ENCODE measurements at regions of chr11 and their contacts with region 1.

Region 1: DNA sequence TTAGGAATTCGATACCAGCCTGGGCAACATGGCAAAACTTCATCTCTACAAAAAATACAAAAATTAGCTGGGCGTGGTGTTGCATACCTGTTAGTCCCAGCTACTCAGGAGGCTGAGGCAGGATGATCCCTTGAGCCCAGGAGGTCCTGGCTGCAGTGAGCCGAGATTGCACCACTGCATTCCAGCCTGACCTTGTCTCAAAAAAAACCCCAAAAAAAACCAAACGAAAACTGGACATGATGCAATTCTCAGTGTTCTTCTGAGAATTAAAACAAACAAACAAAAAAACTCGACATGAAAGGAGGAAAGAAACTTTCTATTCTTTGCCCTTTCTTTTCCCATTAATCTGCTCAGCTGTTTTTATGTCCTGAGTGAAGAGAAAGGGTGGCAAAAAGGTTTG is 7.4 kb downstream of the MED17 start:
- DNase-seq: no peak
- ATAC-seq: no peak
- H3K4me3 ChIP-seq: no peak overlapping the region
- H3K27ac ChIP-seq: no peak overlapping the region
- H3K4me1 ChIP-seq: peaks cover 9 to 19% of the 10 kb centered on the region in 2 donors
- H3K27me3 ChIP-seq: no peaks in the 10 kb centered on the region
- CTCF ChIP-seq: no peak

Region 2: DNA sequence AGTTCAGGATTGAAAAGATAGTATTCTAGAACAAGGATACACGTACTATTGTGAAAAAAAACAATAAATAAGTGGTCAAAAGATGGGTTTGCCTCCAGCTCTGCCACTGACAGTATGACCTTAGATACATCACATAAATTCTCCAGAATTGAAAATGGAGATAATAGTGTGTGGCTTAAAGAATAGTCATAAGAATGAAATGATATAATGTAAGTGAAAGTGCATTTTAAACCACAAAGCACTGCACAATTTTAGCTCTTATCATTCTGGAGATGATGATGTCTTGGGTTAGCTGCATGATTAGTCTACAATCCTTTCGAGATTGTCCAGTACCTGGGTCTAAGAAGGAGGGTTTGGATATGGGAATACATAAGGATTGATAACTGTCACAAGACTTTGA is 151.9 kb before region 1 on chr11:
- intact Hi-C with region 1: no loop called
- DNase-seq: no peak
- ATAC-seq: no peak
- H3K4me3 ChIP-seq: no peak overlapping the region
- H3K27ac ChIP-seq: no peak overlapping the region
- H3K4me1 ChIP-seq: no peaks in the 10 kb centered on the region
- H3K27me3 ChIP-seq: no peaks in the 10 kb centered on the region
- CTCF ChIP-seq: no peak

Region 3: GRCh38 chr11:93737904-93738612 is 53.4 kb before region 1 on chr11:
- intact Hi-C with region 1: loop called in 1 of 2 experiments (anchors 10 kb)
- DNase-seq: no peak
- ATAC-seq: no peak
- H3K4me3 ChIP-seq: peak overlapping the region in 1 of 2 donors; percentile 71
- H3K27ac ChIP-seq: no peak overlapping the region
- H3K4me1 ChIP-seq: peaks cover 7 to 75% of the 10 kb centered on the region in 2 donors
- H3K27me3 ChIP-seq: no peaks in the 10 kb centered on the region
- CTCF ChIP-seq: no peak

Measured in left lung (tissue), 14 donors.